Activated T-helper 2 cell treated with anti-CD3 and anti-CD28 coated beads, Interferon-gamma antibody, Interleukin-2, Interleukin-4, amounts not matched to agents 10 μg/mL and 5 μg/mL and 100 μg/mL, durations not matched to agents 14 hours and 24 hours and 36 hours (primary cell): ENCODE measurements at regions of chr3 and their contacts with region 1.

Region 1: GRCh38 chr3:46349485-46350261 is 4.2 kb upstream of the CCR2 start:
- DNase-seq: no peak
- H3K4me3 Mint-ChIP-seq: peak overlapping the region; percentile 43
- H3K27ac Mint-ChIP-seq: peak overlapping the region; percentile 71
- H3K4me1 Mint-ChIP-seq: peaks cover 62% of the 10 kb centered on the region
- H3K27me3 Mint-ChIP-seq: peaks cover 39% of the 10 kb centered on the region

Region 2: GRCh38 chr3:46208167-46208704 is 141.4 kb before region 1 on chr3 and contains the start of gene CCR1:
- intact Hi-C with region 1: loop called (anchors 1 kb)
- DNase-seq: peak; percentile 44
- H3K4me3 Mint-ChIP-seq: no peak within 1 kb of the TSS
- H3K27ac Mint-ChIP-seq: peak within 1 kb of the TSS; percentile 18
- H3K4me1 Mint-ChIP-seq: peaks cover 25% of the 10 kb centered on the region
- H3K27me3 Mint-ChIP-seq: peaks cover 31% of the 10 kb centered on the region
- total RNA-seq, gene CCR1: 0.41 and 0.51 TPM in 2 replicates

Region 3: GRCh38 chr3:46284981-46285683 is 64.5 kb before region 1 on chr3:
- intact Hi-C with region 1: loop called (anchors 2 kb)
- DNase-seq: peak; percentile 47
- H3K4me3 Mint-ChIP-seq: no peak overlapping the region
- H3K27ac Mint-ChIP-seq: peak overlapping the region; percentile 53
- H3K4me1 Mint-ChIP-seq: peaks cover 70% of the 10 kb centered on the region
- H3K27me3 Mint-ChIP-seq: peaks cover 22% of the 10 kb centered on the region

Region 4: GRCh38 chr3:46334741-46335478 is 14.8 kb before region 1 on chr3:
- intact Hi-C with region 1: loop called (anchors 2 kb)
- DNase-seq: no peak
- H3K4me3 Mint-ChIP-seq: no peak overlapping the region
- H3K27ac Mint-ChIP-seq: no peak overlapping the region
- H3K4me1 Mint-ChIP-seq: peaks cover 5% of the 10 kb centered on the region
- H3K27me3 Mint-ChIP-seq: peaks cover 44% of the 10 kb centered on the region